AG04449 (cell line): ENCODE measurements at regions of chr3 and their contacts with region 1.

Region 1: GRCh38 chr3:126522363-126522788 is 1.6 kb upstream of the CHST13 start:
- DNase-seq: no peak
- H3K4me3 ChIP-seq: no peak overlapping the region
- CTCF ChIP-seq: peak; percentile 83

Region 2: DNA sequence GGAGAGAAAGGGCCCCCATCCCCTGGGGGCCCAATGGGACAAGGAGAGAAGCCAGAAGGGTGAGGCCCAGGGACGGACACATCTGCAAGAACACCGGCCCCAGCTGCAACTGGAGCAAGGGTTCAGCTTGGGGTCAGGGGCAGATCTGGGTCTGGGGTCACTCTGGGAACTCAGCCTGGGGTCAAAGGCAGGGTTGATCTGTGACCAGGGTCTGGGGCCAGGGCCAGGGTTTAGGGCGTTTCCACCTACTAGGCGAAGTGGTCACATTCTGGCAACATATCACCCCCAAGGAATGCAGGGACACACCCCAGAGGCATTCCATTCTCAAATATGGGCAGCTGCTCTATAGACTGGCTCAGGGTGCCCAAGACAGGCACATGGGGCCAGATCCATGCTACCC is 13.8 kb before region 1 on chr3:
- CTCF ChIA-PET with region 1: interaction called, 68 read pairs
- POLR2A ChIA-PET with region 1: no interaction called
- DNase-seq: no peak
- H3K4me3 ChIP-seq: no peak overlapping the region
- CTCF ChIP-seq: no peak

Region 3: DNA sequence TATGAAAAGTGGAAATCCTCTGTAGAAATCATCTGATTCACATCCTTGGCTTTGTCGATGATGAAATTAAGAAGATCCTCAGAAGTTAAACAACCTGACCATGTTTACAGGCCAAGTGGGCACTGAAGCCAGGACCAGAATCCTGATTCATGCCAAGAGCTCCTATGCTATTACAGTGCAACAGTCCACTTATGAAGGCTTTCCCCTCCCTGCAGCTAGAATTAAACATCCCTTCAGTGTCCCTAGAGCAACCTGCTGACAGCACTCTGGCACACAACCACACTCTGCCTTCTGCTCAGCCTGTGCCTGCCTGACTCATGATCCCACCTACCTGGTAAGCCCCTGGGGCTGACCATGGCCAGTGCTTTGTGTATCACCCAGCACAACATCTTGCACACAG is 98.8 kb after region 1 on chr3:
- CTCF ChIA-PET with region 1: interaction called, 12 read pairs
- POLR2A ChIA-PET with region 1: no interaction called
- DNase-seq: peak; percentile 36
- H3K4me3 ChIP-seq: no peak overlapping the region
- CTCF ChIP-seq: no peak

Region 4: DNA sequence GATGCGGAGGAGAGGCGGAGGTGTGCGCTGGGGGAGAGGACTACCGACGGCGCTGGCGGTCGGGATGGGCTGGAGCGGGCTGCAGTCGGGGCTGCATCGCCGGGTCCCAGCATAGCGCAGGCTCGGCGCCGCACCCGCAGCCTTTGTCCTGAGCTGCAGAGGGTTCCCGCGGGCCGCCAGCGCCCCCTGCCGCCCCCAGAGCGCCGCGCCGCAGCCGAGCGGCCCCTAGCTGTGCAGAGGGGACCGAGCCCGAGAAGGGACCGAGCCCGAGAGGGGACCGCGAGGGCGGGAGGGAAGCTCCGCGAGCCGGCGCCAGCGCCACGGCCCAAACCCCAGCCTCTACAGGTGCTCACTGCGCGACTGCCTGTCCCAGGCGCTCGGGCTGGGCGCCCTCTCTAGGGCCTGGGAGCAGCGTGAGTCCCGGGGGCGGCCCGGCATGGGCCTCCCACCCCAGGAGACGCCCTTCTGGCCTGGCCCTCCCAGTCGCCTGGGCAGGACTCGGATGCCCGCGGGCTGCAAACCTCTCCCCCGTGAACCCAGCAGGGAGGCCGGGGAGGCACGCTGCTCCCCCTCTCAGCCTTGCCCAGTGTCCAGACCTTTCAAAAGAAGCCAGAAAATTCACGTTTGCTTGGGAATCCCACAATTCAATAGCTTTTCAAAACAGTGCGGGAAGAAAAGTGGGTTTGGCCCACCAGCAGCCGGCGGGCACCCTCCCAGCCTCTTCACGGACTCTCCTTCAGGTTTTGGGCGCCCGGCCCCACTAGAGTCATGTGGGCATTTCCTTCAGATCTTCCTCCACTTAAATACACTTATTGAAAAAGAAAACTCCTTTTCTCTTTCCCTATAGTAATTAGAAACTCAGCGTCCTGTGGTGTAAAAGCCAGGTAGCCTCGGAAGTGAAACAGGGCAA is 933.4 kb after region 1 on chr3:
- CTCF ChIA-PET with region 1: interaction called, 19 read pairs
- POLR2A ChIA-PET with region 1: no interaction called
- DNase-seq: no peak
- H3K4me3 ChIP-seq: peak overlapping the region; percentile 44
- CTCF ChIP-seq: peak; percentile 92